Activated T-helper 1 cell treated with anti-CD3 and anti-CD28 coated beads, Interleukin-12 subunit alpha, Interleukin-12 subunit beta, Interleukin-2, Interleukin-4 antibody, amounts not matched to agents 30 ng/mL and 10 ng/mL and 1 ng/mL, durations not matched to agents 14 hours and 24 hours and 36 hours (primary cell): ENCODE measurements at regions of chr11 and their contacts with region 1.

Region 1: DNA sequence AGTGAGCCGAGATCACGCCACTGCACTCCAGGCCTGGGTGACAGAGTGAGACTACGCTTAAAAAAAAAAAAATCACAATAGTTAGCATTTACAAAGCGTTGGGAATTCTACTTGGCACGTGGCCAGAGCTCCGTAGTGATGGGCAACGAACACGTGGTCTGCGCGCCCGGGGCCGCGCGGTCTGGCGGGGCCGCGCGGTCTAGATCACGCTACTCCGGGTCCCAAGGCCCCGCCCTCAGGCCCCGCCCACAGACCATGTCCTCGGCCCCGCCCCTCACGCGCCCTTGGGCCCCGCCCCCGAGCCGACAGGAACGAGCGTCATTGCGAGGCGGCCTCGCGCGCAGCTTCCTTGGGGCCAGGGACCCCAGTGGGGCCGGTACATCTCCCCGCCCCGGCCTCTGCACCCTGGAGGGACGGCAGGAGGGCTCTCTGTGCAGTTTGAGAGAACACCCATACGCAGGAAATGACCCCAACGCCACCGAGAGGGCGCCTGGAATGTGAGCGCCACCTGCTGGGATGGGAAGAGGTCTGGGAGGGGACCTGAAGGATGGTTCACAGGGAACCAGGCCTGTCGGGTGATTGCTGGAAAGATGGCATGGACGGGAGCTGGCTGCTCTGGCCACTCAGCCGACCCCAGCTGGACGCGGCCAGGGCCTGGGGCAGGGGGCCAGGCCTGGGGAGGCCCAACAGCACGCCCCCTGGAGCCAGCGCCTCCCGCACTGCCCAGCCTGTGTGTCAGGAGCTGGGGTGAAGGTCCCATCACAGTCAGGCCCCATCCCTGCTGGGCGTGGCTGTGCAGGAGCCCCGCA is 2.0 kb upstream of the PTDSS2 start:
- DNase-seq: peak; percentile 92
- H3K4me3 Mint-ChIP-seq: peak overlapping the region; percentile 88
- H3K27ac Mint-ChIP-seq: peak overlapping the region; percentile 91
- H3K4me1 Mint-ChIP-seq: peaks cover 16% of the 10 kb centered on the region
- H3K27me3 Mint-ChIP-seq: no peaks in the 10 kb centered on the region

Region 2: GRCh38 chr11:406978-407739 is 41.0 kb before region 1 on chr11:
- intact Hi-C with region 1: loop called (anchors 1 kb)
- DNase-seq: peak; percentile 84
- H3K4me3 Mint-ChIP-seq: no peak overlapping the region
- H3K27ac Mint-ChIP-seq: peak overlapping the region; percentile 23
- H3K4me1 Mint-ChIP-seq: no peaks in the 10 kb centered on the region
- H3K27me3 Mint-ChIP-seq: peaks cover 2% of the 10 kb centered on the region

Region 3: GRCh38 chr11:416757-417621 is 31.1 kb before region 1 on chr11:
- intact Hi-C with region 1: loop called (anchors 1 kb)
- DNase-seq: peak; percentile 48
- H3K4me3 Mint-ChIP-seq: peak overlapping the region; percentile 65
- H3K27ac Mint-ChIP-seq: peak overlapping the region; percentile 44
- H3K4me1 Mint-ChIP-seq: peaks cover 30% of the 10 kb centered on the region
- H3K27me3 Mint-ChIP-seq: no peaks in the 10 kb centered on the region

Region 4: GRCh38 chr11:429931-430456 is 18.1 kb before region 1 on chr11:
- intact Hi-C with region 1: no loop called
- DNase-seq: no peak
- H3K4me3 Mint-ChIP-seq: no peak overlapping the region
- H3K27ac Mint-ChIP-seq: no peak overlapping the region
- H3K4me1 Mint-ChIP-seq: no peaks in the 10 kb centered on the region
- H3K27me3 Mint-ChIP-seq: no peaks in the 10 kb centered on the region

Region 5: DNA sequence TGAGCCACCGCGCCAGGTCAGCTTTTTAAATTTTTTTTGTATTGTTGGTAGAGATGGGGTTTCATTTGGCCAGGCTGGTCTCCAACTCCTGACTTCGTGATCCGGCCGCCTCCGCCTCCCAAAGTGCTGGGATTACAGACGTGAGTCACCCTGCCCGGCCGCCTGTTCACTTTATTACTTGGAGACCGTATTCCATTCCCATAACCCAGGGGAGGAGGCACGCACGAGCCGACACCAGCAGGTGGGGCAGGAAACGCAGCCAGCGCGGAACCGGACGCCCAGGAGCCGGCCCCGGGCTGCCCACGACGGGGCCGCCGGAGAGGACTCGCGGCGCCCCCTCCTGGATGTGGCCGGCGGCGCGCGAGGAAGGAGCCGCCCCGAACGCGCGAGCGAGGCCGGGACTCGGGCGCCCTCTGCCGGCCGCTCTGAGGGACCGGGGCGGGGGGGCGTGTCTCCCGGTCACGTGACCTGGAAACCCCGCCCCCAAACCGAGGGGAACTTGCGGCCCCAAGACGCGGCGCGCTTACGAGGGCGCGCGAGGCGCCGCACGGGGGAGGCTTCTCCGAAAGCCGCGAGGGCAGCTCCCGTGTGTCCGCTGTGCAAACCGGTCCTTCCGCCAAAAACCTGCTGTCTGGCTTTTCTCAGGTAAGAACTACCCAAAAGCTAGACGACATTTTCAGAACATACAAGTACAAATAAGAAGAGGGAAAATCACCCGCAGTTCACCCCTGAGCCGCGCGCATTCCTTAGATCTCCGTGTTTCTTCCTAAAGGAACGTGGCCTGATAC is 70.5 kb after region 1 on chr11:
- intact Hi-C with region 1: loop called (anchors 1 kb)
- DNase-seq: peak; percentile 81
- H3K4me3 Mint-ChIP-seq: peak overlapping the region; percentile 75
- H3K27ac Mint-ChIP-seq: peak overlapping the region; percentile 47
- H3K4me1 Mint-ChIP-seq: peaks cover 5% of the 10 kb centered on the region
- H3K27me3 Mint-ChIP-seq: no peaks in the 10 kb centered on the region